ENCODE measurements at regions of chr6 and their contacts with region 1.

Region 1: DNA sequence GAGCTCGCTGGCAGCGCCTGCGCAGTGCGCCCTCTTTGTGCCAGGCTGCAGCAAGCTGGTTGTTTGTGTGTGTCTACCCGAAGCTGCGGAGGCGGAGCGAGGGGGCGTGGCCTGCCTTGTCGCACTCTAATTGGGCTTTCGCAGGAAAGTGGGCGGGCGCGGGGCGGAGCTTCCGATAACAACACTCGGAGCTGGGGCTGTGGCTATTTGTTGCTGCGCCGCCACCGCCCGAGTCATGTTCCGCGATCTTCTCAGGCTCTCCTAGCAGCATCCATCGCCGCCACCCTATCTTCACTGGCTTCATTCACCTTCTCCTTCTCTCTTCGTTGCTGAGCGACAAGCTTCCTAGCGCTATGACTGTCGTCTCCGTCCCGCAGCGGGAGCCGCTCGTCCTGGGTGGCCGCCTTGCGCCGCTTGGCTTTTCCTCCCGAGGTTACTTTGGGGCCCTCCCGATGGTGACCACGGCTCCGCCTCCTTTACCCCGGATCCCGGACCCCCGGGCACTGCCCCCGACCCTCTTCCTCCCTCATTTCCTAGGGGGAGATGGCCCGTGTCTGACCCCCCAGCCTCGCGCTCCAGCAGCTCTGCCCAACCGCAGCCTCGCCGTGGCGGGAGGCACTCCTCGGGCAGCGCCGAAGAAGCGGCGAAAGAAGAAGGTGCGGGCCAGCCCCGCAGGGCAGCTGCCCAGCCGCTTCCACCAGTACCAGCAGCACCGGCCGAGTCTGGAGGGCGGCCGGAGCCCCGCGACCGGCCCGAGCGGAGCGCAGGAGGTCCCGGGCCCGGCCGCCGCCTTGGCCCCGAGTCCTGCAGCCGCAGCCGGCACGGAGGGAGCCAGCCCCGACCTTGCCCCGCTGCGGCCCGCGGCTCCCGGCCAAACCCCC is at the start of gene PNRC1:
- DNase-seq: peak; percentile 99 to 100 (median 100)
- ATAC-seq: peak; percentile 86
- H3K4me3 ChIP-seq: peak within 1 kb of the TSS; percentile 96
- H3K4me3 Mint-ChIP-seq: peak within 1 kb of the TSS; percentile 91 to 99 (median 98)
- H3K27ac ChIP-seq: peak within 1 kb of the TSS; percentile 100
- H3K27ac Mint-ChIP-seq: peak within 1 kb of the TSS; percentile 92 to 99 (median 98)
- H3K4me1 ChIP-seq: peaks cover 27 to 33% of the 10 kb centered on the region in 2 donors
- H3K4me1 Mint-ChIP-seq: peaks cover 31 to 54% (median 42%) of the 10 kb centered on the region in 7 donors
- H3K27me3 ChIP-seq: no peaks in the 10 kb centered on the region
- H3K27me3 Mint-ChIP-seq: peaks cover 0 to 4% (median 0%) of the 10 kb centered on the region in 5 donors
- total RNA-seq, gene PNRC1: 108 to 822 (median 763) TPM

Region 2: DNA sequence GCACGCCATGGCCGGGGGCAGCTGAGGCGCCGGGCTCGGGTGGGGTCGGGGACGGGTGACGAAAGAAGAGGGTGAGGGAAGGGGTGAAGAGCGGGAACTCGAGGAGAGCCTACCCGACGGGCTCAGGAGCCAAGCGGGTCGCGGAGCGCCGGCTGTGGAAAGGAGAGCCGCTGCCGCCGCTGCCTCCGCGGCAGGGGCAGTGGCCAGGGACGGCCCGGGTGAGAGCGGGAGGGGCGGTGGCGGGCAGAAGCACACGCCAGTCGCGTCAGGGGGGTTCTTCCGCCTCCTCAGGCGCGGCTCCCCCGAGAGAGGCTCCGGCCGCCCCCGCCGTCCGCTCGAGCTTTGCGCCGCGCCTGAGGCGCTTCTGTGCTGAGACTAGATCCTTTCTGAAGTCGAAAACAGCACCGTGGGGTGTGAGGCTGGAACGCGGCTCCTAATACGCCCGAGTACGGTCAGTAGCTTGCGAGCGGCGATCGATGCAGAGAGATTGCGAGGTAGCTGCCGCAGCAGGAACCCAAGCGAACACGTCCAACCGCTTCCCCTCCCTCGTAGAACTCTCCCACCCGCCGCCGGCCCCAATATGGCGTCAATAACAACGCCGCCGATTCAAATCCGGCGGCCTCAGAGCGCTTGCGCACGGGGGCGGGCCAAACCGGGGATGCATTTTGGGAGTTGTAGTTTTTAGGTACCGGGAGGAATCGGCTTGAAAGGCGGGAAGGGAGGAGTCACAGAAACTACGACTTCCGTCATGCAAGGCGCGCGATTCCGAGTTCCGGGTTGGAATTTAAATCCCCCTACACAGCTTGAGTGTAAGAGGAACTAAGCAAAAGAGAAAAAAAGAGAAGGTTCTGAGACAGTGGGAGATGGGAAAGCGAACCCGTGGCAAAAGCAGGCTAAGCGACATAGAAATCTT is 1378.8 kb before region 1 on chr6 and contains the start of gene AKIRIN2:
- CTCF ChIA-PET with region 1: no interaction called
- POLR2A ChIA-PET with region 1: interaction called, 3 read pairs
- intact Hi-C with region 1: loop called (anchors 1 kb)
- DNase-seq: peak; percentile 96 to 99 (median 98)
- ATAC-seq: peak; percentile 90
- H3K4me3 ChIP-seq: peak within 1 kb of the TSS; percentile 80
- H3K4me3 Mint-ChIP-seq: peak within 1 kb of the TSS; percentile 92 to 98 (median 96)
- H3K27ac ChIP-seq: peak within 1 kb of the TSS; percentile 93
- H3K27ac Mint-ChIP-seq: peak within 1 kb of the TSS; percentile 89 to 97 (median 94)
- H3K4me1 ChIP-seq: peaks cover 6 to 13% of the 10 kb centered on the region in 2 donors
- H3K4me1 Mint-ChIP-seq: peaks cover 22 to 43% (median 40%) of the 10 kb centered on the region in 7 donors
- H3K27me3 ChIP-seq: no peaks in the 10 kb centered on the region
- H3K27me3 Mint-ChIP-seq: no peaks in the 10 kb centered on the region
- total RNA-seq, gene AKIRIN2: 36.0 to 197 (median 57.4) TPM

Region 3: DNA sequence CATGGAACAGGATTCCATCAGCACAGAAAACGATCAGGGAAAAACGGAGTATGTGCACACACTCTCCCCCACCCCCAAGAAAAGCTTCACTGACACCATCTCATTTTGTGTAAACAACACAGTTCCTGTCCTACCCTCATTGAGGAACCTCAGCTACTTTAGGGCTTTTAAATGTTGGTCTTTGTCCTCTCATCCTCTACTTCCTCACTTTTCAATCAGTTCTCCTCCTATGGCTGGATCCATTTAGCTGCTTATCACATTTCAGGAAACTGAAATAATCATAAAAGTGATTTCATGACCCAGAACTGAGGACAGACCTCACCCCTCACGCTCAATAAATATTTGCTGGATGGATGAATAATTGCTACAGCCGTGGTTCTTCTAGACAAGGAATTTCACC is 33.3 kb before region 1 on chr6:
- CTCF ChIA-PET with region 1: no interaction called
- POLR2A ChIA-PET with region 1: interaction called, 12 read pairs
- intact Hi-C with region 1: no loop called
- DNase-seq: no peak
- ATAC-seq: no peak
- H3K4me3 ChIP-seq: no peak overlapping the region
- H3K4me3 Mint-ChIP-seq: no peak overlapping the region
- H3K27ac ChIP-seq: no peak overlapping the region
- H3K27ac Mint-ChIP-seq: peak overlapping the region in 1 of 9 donors; percentile 20
- H3K4me1 ChIP-seq: no peaks in the 10 kb centered on the region
- H3K4me1 Mint-ChIP-seq: peaks cover 0 to 21% (median 16%) of the 10 kb centered on the region in 7 donors
- H3K27me3 ChIP-seq: no peaks in the 10 kb centered on the region
- H3K27me3 Mint-ChIP-seq: no peaks in the 10 kb centered on the region

Region 4: DNA sequence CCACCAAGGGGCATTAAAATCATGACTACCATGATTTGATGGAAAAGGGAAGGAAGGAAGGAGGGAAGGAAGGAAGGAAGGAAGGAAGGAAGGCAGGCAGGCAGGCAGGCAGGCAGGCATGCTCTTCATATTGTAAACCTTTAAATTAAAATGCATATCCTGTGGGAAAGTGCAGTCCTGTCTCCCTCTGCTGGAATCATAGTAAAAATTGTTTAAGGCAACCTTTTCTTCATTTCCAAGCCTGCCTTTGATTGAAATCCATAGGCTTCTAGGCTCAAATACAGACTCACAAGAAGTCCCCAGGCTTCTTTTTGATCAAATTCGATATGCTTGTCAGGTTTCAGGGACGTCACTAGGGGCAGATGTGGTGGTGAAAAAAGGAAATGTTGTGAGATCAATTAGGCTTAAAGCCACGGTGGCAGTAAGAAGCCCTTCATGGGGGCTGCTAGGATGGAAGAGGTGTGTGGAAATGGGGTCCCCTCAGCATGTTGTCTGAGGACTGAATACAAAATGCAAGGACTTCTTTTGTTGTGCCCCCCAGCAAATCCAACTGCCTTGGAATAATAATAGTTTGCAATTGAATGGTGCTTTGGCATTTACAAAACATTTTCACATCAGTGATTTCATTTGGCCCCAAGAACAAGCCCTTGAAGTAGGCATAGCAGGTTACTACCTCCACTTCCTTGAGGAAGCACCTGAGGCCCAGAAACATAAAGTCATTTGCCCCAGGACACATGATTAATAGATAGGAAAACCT is 162.0 kb after region 1 on chr6:
- CTCF ChIA-PET with region 1: interaction called, 4 read pairs
- POLR2A ChIA-PET with region 1: interaction called, 6 read pairs
- intact Hi-C with region 1: loop called in 1 of 2 experiments (anchors 1 kb)
- DNase-seq: peak in 4 of 9 donors; percentile 15 to 35 (median 33)
- ATAC-seq: peak; percentile 48
- H3K4me3 ChIP-seq: no peak overlapping the region
- H3K4me3 Mint-ChIP-seq: no peak overlapping the region
- H3K27ac ChIP-seq: no peak overlapping the region
- H3K27ac Mint-ChIP-seq: no peak overlapping the region
- H3K4me1 ChIP-seq: peaks cover 6 to 8% of the 10 kb centered on the region in 2 donors
- H3K4me1 Mint-ChIP-seq: peaks cover 13 to 29% (median 19%) of the 10 kb centered on the region in 7 donors
- H3K27me3 ChIP-seq: no peaks in the 10 kb centered on the region
- H3K27me3 Mint-ChIP-seq: peaks cover 0 to 34% (median 8%) of the 10 kb centered on the region in 5 donors

Region 5: DNA sequence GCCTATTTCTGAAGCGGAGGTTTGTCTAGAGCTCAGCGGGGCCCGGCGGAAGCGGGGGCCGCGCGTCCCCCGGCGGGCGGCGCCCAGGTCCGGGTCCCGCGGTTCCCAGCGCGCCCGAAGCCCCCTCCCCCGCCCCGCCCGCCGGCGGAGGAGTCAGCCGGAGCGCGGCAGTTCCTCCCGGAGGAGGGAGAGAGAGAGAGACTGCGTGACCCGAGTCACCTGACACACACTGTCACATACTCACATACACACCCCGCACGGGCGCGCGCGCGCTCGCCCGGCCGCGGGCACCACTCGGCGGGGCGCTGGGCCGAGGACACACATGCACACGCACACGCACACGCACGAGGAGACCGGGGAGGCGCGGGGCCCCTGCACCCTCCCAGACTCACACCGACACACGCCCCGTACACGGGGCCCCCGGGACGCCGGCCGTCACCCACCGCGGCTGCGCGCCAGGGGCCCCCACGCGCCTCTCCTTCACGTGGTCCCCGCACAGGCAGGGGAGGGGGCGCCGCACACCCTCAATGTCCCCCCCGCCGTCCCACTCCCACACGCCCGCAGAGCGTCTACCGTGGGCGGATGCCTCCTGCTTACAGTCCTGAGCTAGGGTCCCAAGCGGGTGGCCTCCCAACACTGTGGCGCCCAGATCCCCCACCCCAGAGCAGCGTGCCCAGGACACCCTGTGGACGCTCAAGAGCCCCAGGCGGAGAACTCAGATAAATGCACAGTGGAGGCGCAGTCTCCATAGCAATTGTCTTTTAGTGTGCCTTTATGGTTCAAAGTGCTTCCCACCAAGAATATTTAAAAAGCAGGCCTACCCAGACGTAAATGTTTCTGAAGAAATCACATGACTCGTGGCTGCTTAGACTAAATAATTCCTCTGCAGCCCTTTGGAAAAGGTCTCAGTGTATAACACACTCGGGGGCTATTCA is 331.6 kb after region 1 on chr6 and contains the start of gene RRAGD:
- CTCF ChIA-PET with region 1: no interaction called
- POLR2A ChIA-PET with region 1: interaction called, 5 read pairs
- intact Hi-C with region 1: loop called in 1 of 2 experiments (anchors 1 kb)
- DNase-seq: peak; percentile 51 to 69 (median 61)
- ATAC-seq: peak; percentile 90
- H3K4me3 ChIP-seq: peak within 1 kb of the TSS; percentile 79
- H3K4me3 Mint-ChIP-seq: peak within 1 kb of the TSS; percentile 87 to 100 (median 97)
- H3K27ac ChIP-seq: peak within 1 kb of the TSS; percentile 57
- H3K27ac Mint-ChIP-seq: peak within 1 kb of the TSS; percentile 53 to 98 (median 88)
- H3K4me1 ChIP-seq: peaks cover 8% of the 10 kb centered on the region in 2 donors
- H3K4me1 Mint-ChIP-seq: peaks cover 2 to 24% (median 19%) of the 10 kb centered on the region in 7 donors
- H3K27me3 ChIP-seq: no peaks in the 10 kb centered on the region
- H3K27me3 Mint-ChIP-seq: peaks cover 6 to 64% (median 18%) of the 10 kb centered on the region in 5 donors
- total RNA-seq, gene RRAGD: 7.3 to 12.1 (median 9.6) TPM

Region 6: GRCh38 chr6:90586836-90587638 is 1506.3 kb after region 1 on chr6 and contains the start of gene MAP3K7:
- CTCF ChIA-PET with region 1: no interaction called
- POLR2A ChIA-PET with region 1: interaction called, 3 read pairs
- intact Hi-C with region 1: loop called (anchors 1 to 5 kb)
- DNase-seq: peak; percentile 83 to 96 (median 93)
- ATAC-seq: peak; percentile 90
- H3K4me3 ChIP-seq: peak within 1 kb of the TSS; percentile 88
- H3K4me3 Mint-ChIP-seq: peak within 1 kb of the TSS; percentile 92 to 99 (median 96)
- H3K27ac ChIP-seq: peak within 1 kb of the TSS; percentile 93
- H3K27ac Mint-ChIP-seq: peak within 1 kb of the TSS; percentile 93 to 100 (median 99)
- H3K4me1 ChIP-seq: peaks cover 17 to 22% of the 10 kb centered on the region in 2 donors
- H3K4me1 Mint-ChIP-seq: peaks cover 24 to 49% (median 45%) of the 10 kb centered on the region in 7 donors
- H3K27me3 ChIP-seq: no peaks in the 10 kb centered on the region
- H3K27me3 Mint-ChIP-seq: peaks cover 5 to 36% (median 11%) of the 10 kb centered on the region in 5 donors
- total RNA-seq, gene MAP3K7: 16.1 to 38.5 (median 29.9) TPM